ENCODE measurements at regions of chrX and their contacts with region 1.

Region 1: GRCh38 chrX:137550665-137551261 is 15.2 kb upstream of the ZIC3 start:
- DNase-seq: no peak
- H3K4me3 Mint-ChIP-seq: no peak overlapping the region
- H3K27ac Mint-ChIP-seq: no peak overlapping the region
- H3K4me1 Mint-ChIP-seq: no peaks in the 10 kb centered on the region
- H3K27me3 Mint-ChIP-seq: peaks cover 43% of the 10 kb centered on the region

Region 2: GRCh38 chrX:137565921-137566745 is 15.4 kb after region 1 on chrX and contains the start of gene ZIC3:
- intact Hi-C with region 1: loop called (anchors 2 kb)
- DNase-seq: no peak
- H3K4me3 Mint-ChIP-seq: no peak within 1 kb of the TSS
- H3K27ac Mint-ChIP-seq: no peak within 1 kb of the TSS
- H3K4me1 Mint-ChIP-seq: no peaks in the 10 kb centered on the region
- H3K27me3 Mint-ChIP-seq: peaks cover 56% of the 10 kb centered on the region
- total RNA-seq, gene ZIC3: not detected in 2 replicates

Region 3: DNA sequence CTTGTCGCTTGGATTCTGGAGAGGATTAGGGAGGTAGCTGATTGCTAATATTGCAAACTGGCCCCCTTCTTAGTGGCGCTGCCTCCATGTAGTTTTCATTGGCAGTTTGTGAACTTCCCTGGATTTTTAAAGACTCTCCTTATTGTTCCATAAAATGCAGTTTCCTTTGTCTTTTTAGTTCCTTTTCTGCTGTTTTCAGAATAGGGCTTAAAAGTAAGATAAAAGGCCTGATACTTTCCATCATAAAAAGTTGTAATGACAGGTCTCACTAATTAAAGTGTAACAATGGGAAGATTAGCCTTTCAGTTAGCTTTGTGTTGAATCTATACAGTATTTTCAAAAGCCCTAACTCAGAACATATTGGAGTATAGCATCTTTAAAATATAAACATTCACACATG is 36.4 kb after region 1 on chrX:
- intact Hi-C with region 1: no loop called
- DNase-seq: no peak
- H3K4me3 Mint-ChIP-seq: no peak overlapping the region
- H3K27ac Mint-ChIP-seq: no peak overlapping the region
- H3K4me1 Mint-ChIP-seq: no peaks in the 10 kb centered on the region
- H3K27me3 Mint-ChIP-seq: no peaks in the 10 kb centered on the region